ENCODE measurements at regions of chr17 and their contacts with region 1.

Region 1: GRCh38 chr17:60586288-60586974 is 13.6 kb upstream of the PPM1D start:
- DNase-seq: no peak
- ATAC-seq: no peak
- H3K4me3 ChIP-seq: no peak overlapping the region
- H3K27ac ChIP-seq: no peak overlapping the region
- H3K4me1 ChIP-seq: no peaks in the 10 kb centered on the region
- H3K27me3 ChIP-seq: no peaks in the 10 kb centered on the region
- CTCF ChIP-seq: peak; percentile 61

Region 2: GRCh38 chr17:60188759-60189158 is 397.7 kb before region 1 on chr17:
- CTCF ChIA-PET with region 1: no interaction called
- POLR2A ChIA-PET with region 1: interaction called, 10 read pairs
- in situ Hi-C with region 1: no loop called
- intact Hi-C with region 1: no loop called
- DNase-seq: no peak
- ATAC-seq: no peak
- H3K4me3 ChIP-seq: no peak overlapping the region
- H3K27ac ChIP-seq: no peak overlapping the region
- H3K4me1 ChIP-seq: no peaks in the 10 kb centered on the region
- H3K27me3 ChIP-seq: no peaks in the 10 kb centered on the region
- CTCF ChIP-seq: no peak